ENCODE measurements at regions of chr9 and their contacts with region 1.

Region 1: GRCh38 chr9:130042833-130043653 is at the start of gene FNBP1:
- DNase-seq: peak; percentile 69 to 90 (median 80)
- ATAC-seq: peak; percentile 71
- H3K4me3 ChIP-seq: peak within 1 kb of the TSS; percentile 68 to 97
- H3K4me3 Mint-ChIP-seq: peak within 1 kb of the TSS; percentile 95
- H3K27ac ChIP-seq: peak within 1 kb of the TSS; percentile 82 to 84
- H3K27ac Mint-ChIP-seq: peak within 1 kb of the TSS; percentile 97
- H3K4me1 ChIP-seq: peaks cover 37% of the 10 kb centered on the region
- H3K4me1 Mint-ChIP-seq: peaks cover 58% of the 10 kb centered on the region
- H3K27me3 ChIP-seq: no peaks in the 10 kb centered on the region
- H3K27me3 Mint-ChIP-seq: no peaks in the 10 kb centered on the region
- CTCF ChIP-seq: no peak
- total RNA-seq, gene FNBP1: 169 to 194 TPM

Region 2: GRCh38 chr9:129835021-129835871 is 207.8 kb before region 1 on chr9 and contains the starts of genes C9orf78 and USP20:
- CTCF ChIA-PET with region 1: no interaction called
- POLR2A ChIA-PET with region 1: no interaction called
- intact Hi-C with region 1: loop called (anchors 2 kb)
- DNase-seq: peak; percentile 95 to 99 (median 97)
- ATAC-seq: peak; percentile 93
- H3K4me3 ChIP-seq: peak within 1 kb of the TSS; percentile 86 to 93
- H3K4me3 Mint-ChIP-seq: peak within 1 kb of the TSS; percentile 99
- H3K27ac ChIP-seq: peak within 1 kb of the TSS; percentile 89 to 94
- H3K27ac Mint-ChIP-seq: peak within 1 kb of the TSS; percentile 98
- H3K4me1 ChIP-seq: peaks cover 53% of the 10 kb centered on the region
- H3K4me1 Mint-ChIP-seq: peaks cover 62% of the 10 kb centered on the region
- H3K27me3 ChIP-seq: no peaks in the 10 kb centered on the region
- H3K27me3 Mint-ChIP-seq: no peaks in the 10 kb centered on the region
- CTCF ChIP-seq: no peak
- total RNA-seq, gene C9orf78: 176 to 190 TPM
- total RNA-seq, gene USP20: 83.5 to 91.0 TPM

Region 3: DNA sequence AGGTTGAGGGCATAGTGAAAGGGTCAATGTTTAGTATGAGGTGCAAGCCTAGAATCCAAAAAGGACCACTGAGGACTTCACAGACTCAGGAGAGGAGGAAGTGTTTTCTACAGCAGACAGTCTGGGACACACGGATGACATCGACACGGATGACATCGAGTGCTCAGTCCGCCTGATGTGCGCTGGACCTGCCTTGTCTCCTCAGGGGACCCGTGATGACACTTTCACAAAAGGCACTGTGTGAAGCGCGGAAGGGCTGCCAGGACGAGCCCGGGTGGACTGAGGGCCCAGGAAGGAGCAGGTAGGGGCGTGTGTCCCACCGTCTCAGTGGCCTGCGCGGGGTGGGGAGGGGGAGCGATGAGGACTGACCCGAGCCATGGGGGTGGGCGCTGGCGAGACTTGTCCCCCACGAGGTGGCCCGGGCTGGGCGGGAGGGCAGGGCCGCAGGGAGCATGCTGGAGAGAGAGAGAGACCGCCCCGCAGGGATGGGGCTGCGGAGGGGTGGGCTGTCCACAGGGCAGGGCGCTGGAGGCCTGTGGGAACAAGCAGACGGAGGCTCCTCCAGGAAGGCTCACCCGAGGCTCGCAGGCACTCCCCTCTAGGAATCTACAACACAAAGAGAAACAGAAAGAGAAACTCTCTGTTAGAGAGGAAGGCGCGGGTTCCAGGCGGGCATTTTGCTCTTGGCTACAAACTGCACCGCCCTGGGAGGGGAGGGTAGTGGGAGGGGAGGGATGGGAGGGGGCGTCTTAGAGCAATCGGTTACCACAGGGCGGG is 152.9 kb before region 1 on chr9:
- CTCF ChIA-PET with region 1: interaction called, 8 read pairs
- POLR2A ChIA-PET with region 1: interaction called, 28 read pairs
- intact Hi-C with region 1: loop called (anchors 1 to 2 kb)
- DNase-seq: peak in 8 of 9 experiments; percentile 39 to 86 (median 68)
- ATAC-seq: no peak
- H3K4me3 ChIP-seq: peak overlapping the region; percentile 33 to 39
- H3K4me3 Mint-ChIP-seq: peak overlapping the region; percentile 89
- H3K27ac ChIP-seq: peak overlapping the region; percentile 91 to 98
- H3K27ac Mint-ChIP-seq: peak overlapping the region; percentile 100
- H3K4me1 ChIP-seq: peaks cover 89% of the 10 kb centered on the region
- H3K4me1 Mint-ChIP-seq: peaks cover 85% of the 10 kb centered on the region
- H3K27me3 ChIP-seq: no peaks in the 10 kb centered on the region
- H3K27me3 Mint-ChIP-seq: no peaks in the 10 kb centered on the region
- CTCF ChIP-seq: no peak

Region 4: GRCh38 chr9:129995409-129996160 is 47.5 kb before region 1 on chr9:
- CTCF ChIA-PET with region 1: interaction called, 3 read pairs
- POLR2A ChIA-PET with region 1: interaction called, 5 read pairs
- intact Hi-C with region 1: loop called in 1 of 2 experiments (anchors 5 kb)
- DNase-seq: peak in 1 of 9 experiments; percentile 53
- ATAC-seq: peak; percentile 43
- H3K4me3 ChIP-seq: no peak overlapping the region
- H3K4me3 Mint-ChIP-seq: peak overlapping the region; percentile 40
- H3K27ac ChIP-seq: peak overlapping the region; percentile 13 to 41
- H3K27ac Mint-ChIP-seq: peak overlapping the region; percentile 85
- H3K4me1 ChIP-seq: peaks cover 60% of the 10 kb centered on the region
- H3K4me1 Mint-ChIP-seq: peaks cover 67% of the 10 kb centered on the region
- H3K27me3 ChIP-seq: no peaks in the 10 kb centered on the region
- H3K27me3 Mint-ChIP-seq: no peaks in the 10 kb centered on the region
- CTCF ChIP-seq: no peak

Region 5: GRCh38 chr9:130029223-130029973 is 13.6 kb before region 1 on chr9:
- CTCF ChIA-PET with region 1: interaction called, 4 read pairs
- POLR2A ChIA-PET with region 1: interaction called, 6 read pairs
- intact Hi-C with region 1: loop called in 1 of 2 experiments (anchors 1 kb)
- DNase-seq: peak in 2 of 9 experiments; percentile 29 to 60
- ATAC-seq: no peak
- H3K4me3 ChIP-seq: no peak overlapping the region
- H3K4me3 Mint-ChIP-seq: peak overlapping the region; percentile 35
- H3K27ac ChIP-seq: peak overlapping the region in 1 of 2 experiments; percentile 52
- H3K27ac Mint-ChIP-seq: peak overlapping the region; percentile 96
- H3K4me1 ChIP-seq: peaks cover 85% of the 10 kb centered on the region
- H3K4me1 Mint-ChIP-seq: peaks cover 86% of the 10 kb centered on the region
- H3K27me3 ChIP-seq: no peaks in the 10 kb centered on the region
- H3K27me3 Mint-ChIP-seq: no peaks in the 10 kb centered on the region
- CTCF ChIP-seq: no peak

Measured in CD8-positive, alpha-beta T cell (primary cell).